SK-N-SH (cell line): ENCODE measurements at regions of chr20 and their contacts with region 1.

Region 1: DNA sequence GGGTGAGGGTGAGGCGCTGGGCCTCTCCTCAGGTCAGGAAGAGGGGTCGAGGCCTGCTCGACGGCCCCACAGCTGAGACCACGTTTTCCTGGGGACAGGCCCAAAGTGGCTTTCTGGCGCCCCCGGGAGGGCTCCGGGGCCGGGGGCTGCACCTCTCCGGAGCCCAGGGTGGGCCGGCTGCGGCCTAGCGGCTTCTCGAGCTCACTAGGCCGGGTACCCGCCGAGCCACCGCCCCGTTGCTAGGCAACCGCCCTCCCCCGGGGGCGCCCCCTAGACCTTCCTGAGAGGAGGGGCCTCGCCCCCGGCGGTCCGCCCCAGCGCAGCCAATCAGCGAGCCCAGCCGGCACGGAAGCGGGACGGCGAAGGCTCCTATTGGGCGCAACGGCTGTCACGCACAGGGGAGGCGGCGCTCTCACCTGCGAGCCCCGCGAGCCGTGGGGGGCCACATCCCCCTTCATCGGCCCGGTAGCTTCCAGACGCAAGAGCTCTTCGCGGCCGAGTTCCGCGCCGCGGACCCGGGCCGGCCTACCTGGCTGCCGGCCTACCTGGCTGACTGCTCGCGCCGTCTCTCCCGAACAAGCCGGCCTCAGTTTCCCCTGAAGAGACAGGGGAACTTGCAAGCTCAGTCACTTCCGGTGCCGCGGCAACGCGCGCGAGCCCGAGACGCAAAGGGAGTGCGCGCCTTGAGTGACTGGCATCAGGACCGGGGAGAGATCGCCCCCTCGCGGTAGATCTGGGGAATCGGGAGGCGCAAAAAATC is 831 bp upstream of the BCL2L1 start:
- DNase-seq: peak; percentile 99
- H3K4me3 ChIP-seq: peak overlapping the region; percentile 59 to 81
- H3K27ac ChIP-seq: peak overlapping the region; percentile 98 to 100
- H3K4me1 ChIP-seq: peaks cover 18 to 35% of the 10 kb centered on the region in 2 experiments
- H3K27me3 ChIP-seq: no peaks in the 10 kb centered on the region
- CTCF ChIP-seq: peak; percentile 94
- EP300 ChIP-seq: no peak
- RAD21 ChIP-seq: peak; percentile 94

Region 2: GRCh38 chr20:31566658-31567379 is 156.7 kb before region 1 on chr20:
- CTCF ChIA-PET with region 1: interaction called, 31 read pairs
- POLR2A ChIA-PET with region 1: interaction called, 7 read pairs
- DNase-seq: no peak
- H3K4me3 ChIP-seq: no peak overlapping the region
- H3K27ac ChIP-seq: peak overlapping the region; percentile 15 to 99; a peak in 3 of 4 replicates
- H3K4me1 ChIP-seq: peaks cover 38 to 55% of the 10 kb centered on the region in 2 experiments
- H3K27me3 ChIP-seq: no peaks in the 10 kb centered on the region
- CTCF ChIP-seq: no peak
- EP300 ChIP-seq: no peak
- RAD21 ChIP-seq: no peak

Region 3: GRCh38 chr20:31630187-31630790 is 93.2 kb before region 1 on chr20:
- CTCF ChIA-PET with region 1: interaction called, 84 read pairs
- POLR2A ChIA-PET with region 1: interaction called, 12 read pairs
- DNase-seq: no peak
- H3K4me3 ChIP-seq: no peak overlapping the region
- H3K27ac ChIP-seq: peak overlapping the region in 1 of 2 experiments; percentile 16; a peak in 1 of 4 replicates
- H3K4me1 ChIP-seq: peaks cover 0 to 6% of the 10 kb centered on the region in 2 experiments; a peak in 1 of 4 replicates
- H3K27me3 ChIP-seq: no peaks in the 10 kb centered on the region
- CTCF ChIP-seq: no peak
- EP300 ChIP-seq: no peak
- RAD21 ChIP-seq: no peak

Region 4: GRCh38 chr20:31674895-31675827 is 48.3 kb before region 1 on chr20:
- CTCF ChIA-PET with region 1: interaction called, 19 read pairs
- POLR2A ChIA-PET with region 1: interaction called, 4 read pairs
- DNase-seq: peak; percentile 46
- H3K4me3 ChIP-seq: no peak overlapping the region
- H3K27ac ChIP-seq: peak overlapping the region; percentile 25 to 78; a peak in 3 of 4 replicates
- H3K4me1 ChIP-seq: peaks cover 52 to 56% of the 10 kb centered on the region in 2 experiments; a peak in 3 of 4 replicates
- H3K27me3 ChIP-seq: no peaks in the 10 kb centered on the region
- CTCF ChIP-seq: no peak
- EP300 ChIP-seq: no peak
- RAD21 ChIP-seq: no peak

Region 5: GRCh38 chr20:31712564-31713311 is 10.8 kb before region 1 on chr20:
- CTCF ChIA-PET with region 1: interaction called, 18 read pairs
- POLR2A ChIA-PET with region 1: interaction called, 3 read pairs
- DNase-seq: no peak
- H3K4me3 ChIP-seq: peak overlapping the region; percentile 17 to 43; a peak in 3 of 4 replicates
- H3K27ac ChIP-seq: peak overlapping the region; percentile 95 to 99
- H3K4me1 ChIP-seq: peaks cover 33 to 51% of the 10 kb centered on the region in 2 experiments
- H3K27me3 ChIP-seq: no peaks in the 10 kb centered on the region
- CTCF ChIP-seq: no peak
- EP300 ChIP-seq: peak in 1 of 2 experiments; percentile 58; a peak in 1 of 4 replicates
- RAD21 ChIP-seq: no peak